ENCODE measurements at regions of chr21 and their contacts with region 1.

Region 1: DNA sequence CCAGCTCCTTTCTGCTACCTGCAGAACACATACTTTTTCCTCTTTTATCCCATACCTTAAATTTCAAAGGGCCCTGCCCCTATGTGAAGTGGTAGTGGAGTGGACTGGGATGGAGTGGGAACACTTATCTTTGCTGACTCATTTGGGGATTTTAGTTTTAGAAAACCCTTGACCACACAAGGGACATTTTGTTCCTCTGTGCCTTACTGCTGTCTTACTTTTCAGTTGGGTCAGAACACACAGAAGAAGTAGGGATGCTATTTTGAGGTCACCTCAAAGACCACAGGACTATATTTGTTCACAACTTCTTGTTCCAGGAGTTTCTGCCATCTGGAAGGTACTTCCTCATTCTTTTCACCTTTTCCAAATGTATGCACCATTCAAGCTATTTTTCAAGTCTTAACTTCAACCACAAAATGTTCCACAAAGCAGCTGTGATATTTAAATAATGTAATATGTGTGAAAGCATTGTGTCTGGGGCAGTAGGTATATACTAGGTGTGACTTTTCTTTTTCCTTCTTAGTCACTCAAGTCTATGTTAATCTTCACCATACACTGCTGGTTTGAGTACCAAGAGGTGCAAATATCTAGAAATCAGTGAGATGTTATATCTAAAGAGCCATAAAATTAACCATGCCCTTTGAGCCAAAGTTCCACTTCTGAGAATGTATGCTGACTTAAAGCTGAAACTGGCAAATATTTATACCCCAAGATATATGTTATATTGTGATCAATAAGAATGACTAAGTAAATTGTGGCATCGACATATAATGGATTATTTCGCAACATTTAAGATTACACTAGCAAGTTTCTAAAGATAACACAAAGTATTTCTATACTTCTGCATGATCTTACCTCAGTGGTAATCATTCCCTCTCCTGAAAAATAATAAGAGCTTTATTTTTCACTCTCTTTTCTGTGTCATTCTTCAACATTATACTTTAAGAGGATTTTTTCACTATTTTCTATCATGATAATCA is 308.5 kb downstream of the MRPL39 start:
- DNase-seq: peak; percentile 93
- ATAC-seq: peak; percentile 94
- H3K4me3 ChIP-seq: no peak overlapping the region
- H3K27ac ChIP-seq: peak overlapping the region; percentile 68
- H3K4me1 ChIP-seq: peaks cover 39% of the 10 kb centered on the region
- H3K27me3 ChIP-seq: no peaks in the 10 kb centered on the region
- CTCF ChIP-seq: no peak
- EP300 ChIP-seq: peak; percentile 95 to 97
- POLR2A ChIP-seq: no peak
- RAD21 ChIP-seq: no peak

Region 2: DNA sequence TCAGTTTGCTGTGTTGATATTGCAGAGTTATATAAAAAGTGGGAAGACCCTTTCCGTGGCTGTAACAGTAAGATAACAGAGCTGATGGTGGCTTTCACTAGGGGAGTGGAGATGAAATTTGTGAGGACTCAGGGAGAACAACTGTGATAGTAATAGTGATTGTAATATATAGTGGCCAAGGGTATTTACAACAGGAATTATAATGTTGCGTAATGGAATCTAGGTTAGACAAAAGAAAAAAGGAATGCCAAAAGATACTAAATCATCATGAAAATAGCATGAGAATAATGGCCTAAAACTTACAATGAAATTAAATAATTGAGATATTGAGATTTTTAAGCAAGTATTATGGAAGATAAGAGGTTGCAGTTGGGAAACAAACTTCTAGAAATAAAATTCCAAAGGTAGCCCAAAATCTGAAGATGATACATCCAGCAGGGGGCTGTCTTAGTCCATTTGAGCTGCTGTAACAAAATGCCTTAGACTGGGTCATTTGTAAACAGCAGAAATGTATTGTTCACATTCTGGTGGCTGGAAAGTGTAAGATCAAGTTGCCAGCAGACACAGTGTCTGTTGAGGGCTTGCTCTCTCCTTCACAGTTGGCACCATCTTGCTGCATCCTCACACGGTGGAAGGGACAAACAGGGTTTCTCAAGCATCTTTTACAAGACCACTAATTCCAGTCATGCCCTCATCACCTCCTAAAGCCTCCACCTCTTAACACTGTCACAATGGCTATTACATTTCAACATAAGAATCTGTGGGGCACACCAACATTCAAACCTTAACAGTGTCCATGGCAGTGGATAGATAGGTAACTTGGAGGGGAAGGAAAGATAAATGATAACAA is 402.7 kb before region 1 on chr21:
- CTCF ChIA-PET with region 1: interaction called, 4 read pairs
- POLR2A ChIA-PET with region 1: no interaction called
- RAD21 ChIA-PET with region 1: interaction called, 3 read pairs
- SMC1A ChIA-PET with region 1: interaction called, 4 read pairs
- in situ Hi-C with region 1: no loop called
- intact Hi-C with region 1: loop called (anchors 5 kb)
- DNase-seq: peak; percentile 49
- ATAC-seq: peak; percentile 87
- H3K4me3 ChIP-seq: no peak overlapping the region
- H3K27ac ChIP-seq: no peak overlapping the region
- H3K4me1 ChIP-seq: no peaks in the 10 kb centered on the region
- H3K27me3 ChIP-seq: no peaks in the 10 kb centered on the region
- CTCF ChIP-seq: peak; percentile 48 to 62 (median 50)
- EP300 ChIP-seq: no peak
- POLR2A ChIP-seq: no peak
- RAD21 ChIP-seq: peak; percentile 91

Region 3: DNA sequence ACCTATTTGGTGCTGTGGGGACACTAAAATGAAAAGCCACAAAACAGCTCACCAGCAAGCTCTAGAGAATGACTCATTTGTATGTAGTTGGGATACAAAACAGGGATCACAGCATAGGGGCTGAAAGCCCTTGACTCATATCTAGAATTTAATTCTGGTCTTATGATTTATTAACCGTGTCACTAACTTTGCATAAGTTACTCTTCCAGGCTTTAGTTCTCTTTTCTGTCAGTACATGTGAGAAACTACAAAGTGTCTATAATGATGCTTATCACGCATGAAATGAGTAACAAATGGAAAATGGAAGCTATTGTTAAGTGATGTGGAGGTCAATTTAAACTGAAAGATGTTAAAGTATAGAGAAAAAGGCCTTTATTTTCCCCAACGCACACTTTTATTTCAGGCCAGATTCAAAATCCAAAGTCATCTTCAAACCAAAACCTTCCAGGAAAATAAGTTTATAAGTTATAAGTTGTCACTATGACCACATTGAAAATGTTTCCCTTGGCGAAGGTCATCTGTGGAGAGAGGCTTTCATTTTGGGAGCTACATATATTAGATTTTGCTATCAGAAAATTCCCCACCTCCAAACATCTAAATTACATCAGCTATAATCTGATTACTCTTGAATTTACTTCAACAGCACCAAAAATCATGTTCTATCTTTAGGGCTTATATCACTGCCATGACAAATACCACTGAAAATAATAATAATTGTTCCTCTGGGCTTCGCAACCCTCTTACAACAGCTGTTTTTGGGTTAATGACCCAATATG is 122.0 kb before region 1 on chr21:
- CTCF ChIA-PET with region 1: interaction called, 7 read pairs
- POLR2A ChIA-PET with region 1: no interaction called
- RAD21 ChIA-PET with region 1: interaction called, 9 read pairs
- SMC1A ChIA-PET with region 1: interaction called, 19 read pairs
- in situ Hi-C with region 1: no loop called
- intact Hi-C with region 1: loop called (anchors 1 kb)
- DNase-seq: peak; percentile 87
- ATAC-seq: peak; percentile 92
- H3K4me3 ChIP-seq: no peak overlapping the region
- H3K27ac ChIP-seq: peak overlapping the region; percentile 58; the same call in 1 of the 2 replicates
- H3K4me1 ChIP-seq: peaks cover 12% of the 10 kb centered on the region
- H3K27me3 ChIP-seq: no peaks in the 10 kb centered on the region
- CTCF ChIP-seq: no peak
- EP300 ChIP-seq: peak; percentile 95 to 97
- POLR2A ChIP-seq: no peak
- RAD21 ChIP-seq: no peak

Region 4: DNA sequence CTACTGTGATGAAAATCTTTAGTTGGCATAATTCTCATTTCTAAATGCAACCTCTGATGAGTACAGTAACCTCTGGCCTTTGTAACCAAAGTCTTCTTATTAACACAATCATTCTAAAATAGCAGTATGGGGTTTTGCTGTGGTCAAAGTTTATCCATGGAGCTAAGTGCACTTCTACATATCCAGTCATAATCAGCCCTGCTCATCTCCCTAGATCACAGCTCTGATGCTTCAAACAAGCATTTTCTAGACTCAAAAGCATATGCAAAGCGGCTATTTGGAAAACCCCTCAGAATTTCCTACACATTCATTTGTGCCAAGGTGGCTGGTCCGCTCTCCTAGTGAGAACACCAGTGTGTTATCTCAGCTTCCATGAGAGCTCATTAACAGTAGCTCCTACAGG is 110.1 kb before region 1 on chr21:
- CTCF ChIA-PET with region 1: interaction called, 6 read pairs
- POLR2A ChIA-PET with region 1: interaction called, 4 read pairs
- RAD21 ChIA-PET with region 1: interaction called, 13 read pairs
- SMC1A ChIA-PET with region 1: interaction called, 21 read pairs
- in situ Hi-C with region 1: loop called (anchors 5 kb)
- intact Hi-C with region 1: loop called (anchors 2 kb)
- DNase-seq: peak; percentile 88
- ATAC-seq: peak; percentile 83
- H3K4me3 ChIP-seq: no peak overlapping the region
- H3K27ac ChIP-seq: 0 out of 2 replicates have a peak overlapping the region, but pooled peaks have one; percentile 30
- H3K4me1 ChIP-seq: peaks cover 23% of the 10 kb centered on the region; the same call in 1 of the 2 replicates
- H3K27me3 ChIP-seq: no peaks in the 10 kb centered on the region
- CTCF ChIP-seq: no peak
- EP300 ChIP-seq: peak in 1 of 2 experiments; percentile 64; a peak in 2 of 4 replicates
- POLR2A ChIP-seq: no peak
- RAD21 ChIP-seq: 0 out of 2 replicates have a peak, but pooled peaks have one; percentile 8

Region 5: DNA sequence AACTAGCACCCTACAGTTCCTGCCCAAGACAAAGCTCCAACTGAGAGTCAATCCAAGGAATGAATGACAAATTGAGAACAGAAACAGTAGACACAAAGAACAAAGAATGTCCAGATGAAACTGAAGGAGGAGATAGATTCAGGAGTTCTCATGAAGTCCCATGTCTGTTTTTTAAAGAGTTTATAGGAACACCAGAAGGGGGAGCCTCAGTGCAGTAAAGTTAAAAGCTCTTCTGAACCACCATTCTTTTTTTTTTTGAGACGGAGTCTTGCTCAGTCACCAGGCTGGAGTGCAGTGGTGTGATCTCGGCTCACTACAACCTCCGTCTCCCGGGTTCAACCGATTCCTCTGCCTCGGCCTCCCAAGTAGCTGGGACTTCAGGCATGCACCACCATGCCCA is 15.1 kb before region 1 on chr21:
- CTCF ChIA-PET with region 1: interaction called, 11 read pairs
- POLR2A ChIA-PET with region 1: no interaction called
- RAD21 ChIA-PET with region 1: interaction called, 4 read pairs
- SMC1A ChIA-PET with region 1: interaction called, 9 read pairs
- in situ Hi-C with region 1: no loop called
- intact Hi-C with region 1: no loop called
- DNase-seq: no peak
- ATAC-seq: peak; percentile 76
- H3K4me3 ChIP-seq: no peak overlapping the region
- H3K27ac ChIP-seq: no peak overlapping the region
- H3K4me1 ChIP-seq: no peaks in the 10 kb centered on the region
- H3K27me3 ChIP-seq: no peaks in the 10 kb centered on the region
- CTCF ChIP-seq: peak; percentile 34 to 42 (median 35); a peak in 5 of 6 replicates
- EP300 ChIP-seq: no peak
- POLR2A ChIP-seq: no peak
- RAD21 ChIP-seq: peak; percentile 60

Region 6: DNA sequence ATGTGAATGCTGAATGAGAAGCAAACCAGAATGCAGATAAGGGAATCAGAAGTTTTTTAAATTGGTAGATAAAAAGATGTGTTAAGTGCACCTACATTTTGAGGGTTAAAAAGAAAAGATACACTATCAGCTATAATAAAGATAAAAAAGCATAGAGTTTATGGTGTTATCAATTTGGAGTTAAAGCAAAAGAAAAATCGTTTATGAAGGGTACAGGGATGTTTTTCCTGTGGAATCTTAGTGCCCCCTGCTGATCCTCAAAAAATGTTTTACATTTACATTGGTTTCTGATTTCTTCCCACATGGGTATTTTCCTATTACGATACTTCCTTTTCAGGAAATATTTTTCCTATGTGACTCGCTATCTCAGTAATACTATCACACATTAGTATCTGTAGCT is 15.0 kb after region 1 on chr21:
- CTCF ChIA-PET with region 1: interaction called, 14 read pairs
- POLR2A ChIA-PET with region 1: no interaction called
- RAD21 ChIA-PET with region 1: interaction called, 4 read pairs
- SMC1A ChIA-PET with region 1: interaction called, 7 read pairs
- in situ Hi-C with region 1: no loop called
- intact Hi-C with region 1: no loop called
- DNase-seq: no peak
- ATAC-seq: peak; percentile 38; the same call in 2 of the 3 replicates
- H3K4me3 ChIP-seq: no peak overlapping the region
- H3K27ac ChIP-seq: no peak overlapping the region
- H3K4me1 ChIP-seq: no peaks in the 10 kb centered on the region
- H3K27me3 ChIP-seq: no peaks in the 10 kb centered on the region
- CTCF ChIP-seq: peak; percentile 30 to 46 (median 31); a peak in 4 of 6 replicates
- EP300 ChIP-seq: no peak
- POLR2A ChIP-seq: no peak
- RAD21 ChIP-seq: peak; percentile 67

Region 7: DNA sequence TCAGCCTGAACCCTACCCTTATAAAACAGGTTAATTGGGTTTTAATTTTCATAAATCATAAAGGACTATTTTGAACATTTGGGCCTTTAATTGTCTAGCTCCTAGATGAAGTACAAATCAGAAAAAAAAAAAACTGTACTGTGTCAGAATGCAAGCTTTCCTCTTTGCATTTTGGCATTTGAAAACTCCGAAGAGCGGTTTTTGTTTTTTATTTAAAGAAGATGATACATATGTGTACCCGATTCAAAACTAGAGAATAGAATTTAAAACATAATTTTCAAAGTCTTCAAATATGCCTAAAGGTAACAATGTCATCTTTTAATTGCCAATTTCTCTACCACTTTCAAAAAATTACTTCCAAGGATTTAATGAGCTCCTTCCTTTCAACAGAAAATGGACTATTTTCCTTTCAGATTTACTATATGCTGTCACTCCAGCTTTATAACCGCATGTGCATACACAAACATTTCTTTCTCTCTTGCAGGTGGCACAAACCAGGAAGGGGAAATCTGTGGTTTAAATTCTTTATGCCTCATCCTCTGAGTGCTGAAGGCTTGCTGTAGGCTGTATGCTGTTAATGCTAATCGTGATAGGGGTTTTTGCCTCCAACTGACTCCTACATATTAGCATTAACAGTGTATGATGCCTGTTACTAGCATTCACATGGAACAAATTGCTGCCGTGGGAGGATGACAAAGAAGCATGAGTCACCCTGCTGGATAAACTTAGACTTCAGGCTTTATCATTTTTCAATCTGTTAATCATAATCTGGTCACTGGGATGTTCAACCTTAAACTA is 274.8 kb after region 1 on chr21:
- CTCF ChIA-PET with region 1: no interaction called
- POLR2A ChIA-PET with region 1: no interaction called
- RAD21 ChIA-PET with region 1: no interaction called
- SMC1A ChIA-PET with region 1: interaction called, 3 read pairs
- in situ Hi-C with region 1: no loop called
- intact Hi-C with region 1: loop called (anchors 5 kb)
- DNase-seq: peak; percentile 81
- ATAC-seq: peak; percentile 38
- H3K4me3 ChIP-seq: peak overlapping the region; percentile 14; the same call in 1 of the 2 replicates
- H3K27ac ChIP-seq: peak overlapping the region; percentile 92
- H3K4me1 ChIP-seq: peaks cover 38% of the 10 kb centered on the region
- H3K27me3 ChIP-seq: no peaks in the 10 kb centered on the region
- CTCF ChIP-seq: no peak
- EP300 ChIP-seq: no peak
- POLR2A ChIP-seq: peak; percentile 80
- RAD21 ChIP-seq: no peak